Vagina (tissue), 2 donors: ENCODE measurements at regions of chr10 and their contacts with region 1.

Region 1: DNA sequence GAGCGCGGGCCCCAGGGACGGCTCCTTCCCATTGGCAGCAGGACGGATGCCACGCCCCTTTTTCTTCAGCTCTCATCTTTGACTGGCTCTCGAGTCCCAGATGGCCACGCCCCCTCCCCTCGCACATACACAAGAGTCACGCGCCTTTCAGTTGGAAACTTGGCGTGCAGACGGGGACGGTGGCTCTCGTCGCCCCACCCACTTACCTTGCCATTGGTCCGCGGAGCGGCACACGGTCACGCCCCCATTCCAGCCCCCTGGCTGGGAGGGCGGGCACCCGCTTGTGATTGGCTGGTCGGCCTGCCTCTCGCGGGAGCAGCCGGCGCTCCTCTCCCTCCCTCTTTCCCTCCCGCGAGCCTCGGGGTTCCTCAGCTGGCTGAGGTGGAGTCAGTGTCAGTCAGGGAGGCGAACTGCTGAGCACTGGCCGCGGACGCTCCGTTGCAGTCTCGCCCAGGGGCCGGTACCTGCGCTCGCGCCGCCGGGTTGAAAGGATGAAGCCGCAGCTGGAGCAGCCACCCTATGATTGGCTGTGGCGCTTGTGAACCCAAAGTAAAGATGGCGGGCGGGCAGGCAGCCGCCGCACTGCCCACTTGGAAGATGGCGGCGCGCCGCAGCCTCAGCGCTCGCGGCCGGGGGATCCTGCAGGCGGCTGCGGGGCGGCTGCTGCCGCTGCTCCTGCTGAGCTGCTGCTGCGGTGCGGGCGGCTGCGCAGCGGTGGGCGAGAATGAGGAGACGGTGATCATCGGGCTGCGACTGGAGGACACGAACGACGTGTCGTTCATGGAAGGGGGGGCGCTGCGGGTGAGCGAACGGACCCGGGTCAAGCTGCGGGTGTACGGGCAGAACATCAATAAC is at the start of gene CNNM2:
- DNase-seq: peak; percentile 99 to 100
- H3K4me3 ChIP-seq: peak within 1 kb of the TSS; percentile 83 to 85
- H3K27ac ChIP-seq: peak within 1 kb of the TSS; percentile 99
- H3K4me1 ChIP-seq: peaks cover 42% of the 10 kb centered on the region
- H3K27me3 ChIP-seq: no peaks in the 10 kb centered on the region
- CTCF ChIP-seq: no peak
- POLR2A ChIP-seq: peak in 1 of 2 donors; percentile 8
- total RNA-seq, gene CNNM2: 9.6 TPM

Region 2: GRCh38 chr10:102868911-102869257 is 49.3 kb before region 1 on chr10:
- intact Hi-C with region 1: no loop called
- DNase-seq: no peak
- H3K4me3 ChIP-seq: peak overlapping the region; percentile 59 to 62
- H3K27ac ChIP-seq: peak overlapping the region; percentile 46
- H3K4me1 ChIP-seq: peaks cover 11% of the 10 kb centered on the region
- H3K27me3 ChIP-seq: no peaks in the 10 kb centered on the region
- CTCF ChIP-seq: no peak
- POLR2A ChIP-seq: no peak

Region 3: DNA sequence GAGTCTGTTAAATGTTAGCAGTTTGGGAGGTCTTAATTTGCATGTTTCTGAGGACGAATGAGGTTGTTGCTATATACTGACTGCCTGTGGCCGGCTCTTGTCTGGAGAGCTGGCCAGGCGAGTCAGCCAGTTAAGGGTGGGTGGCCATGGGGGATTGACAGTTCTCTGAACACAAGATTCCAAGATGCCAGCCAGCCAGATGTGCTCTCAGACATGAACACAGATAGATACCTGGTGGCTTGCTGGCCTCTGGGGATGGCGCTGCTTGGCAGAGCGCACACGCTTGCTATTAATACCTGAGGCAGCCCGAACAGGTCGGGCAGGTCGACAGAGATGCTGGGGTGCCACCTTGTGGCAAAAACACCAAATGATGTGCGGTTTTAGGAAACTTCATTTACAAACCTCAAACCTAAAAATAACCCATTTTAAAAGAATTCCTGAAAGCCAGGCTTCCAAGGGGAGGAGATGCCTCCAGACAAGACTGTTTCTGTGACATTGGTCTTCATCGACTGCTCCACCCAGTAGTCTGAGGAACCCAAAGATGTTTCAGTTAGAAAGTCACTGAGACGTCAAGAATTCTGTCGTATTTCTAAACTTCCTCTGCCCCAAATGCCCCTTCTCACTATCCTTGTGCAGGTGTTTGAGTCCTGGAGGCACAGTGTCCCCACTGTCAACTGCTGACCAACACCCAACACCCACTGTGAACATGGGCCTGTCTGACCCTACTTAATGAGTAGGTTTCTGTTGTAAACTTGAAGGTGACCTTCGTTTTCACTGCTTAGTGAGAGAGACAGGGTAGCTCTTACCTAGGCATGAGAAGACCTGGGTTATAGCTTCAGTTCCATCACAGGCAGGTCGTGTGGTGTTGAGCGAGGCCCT is 151.5 kb after region 1 on chr10:
- intact Hi-C with region 1: loop called (anchors 2 kb)
- DNase-seq: no peak
- H3K4me3 ChIP-seq: no peak overlapping the region
- H3K27ac ChIP-seq: no peak overlapping the region
- H3K4me1 ChIP-seq: no peaks in the 10 kb centered on the region
- H3K27me3 ChIP-seq: no peaks in the 10 kb centered on the region
- CTCF ChIP-seq: peak; percentile 29 to 39 (median 37)
- POLR2A ChIP-seq: no peak

Region 4: DNA sequence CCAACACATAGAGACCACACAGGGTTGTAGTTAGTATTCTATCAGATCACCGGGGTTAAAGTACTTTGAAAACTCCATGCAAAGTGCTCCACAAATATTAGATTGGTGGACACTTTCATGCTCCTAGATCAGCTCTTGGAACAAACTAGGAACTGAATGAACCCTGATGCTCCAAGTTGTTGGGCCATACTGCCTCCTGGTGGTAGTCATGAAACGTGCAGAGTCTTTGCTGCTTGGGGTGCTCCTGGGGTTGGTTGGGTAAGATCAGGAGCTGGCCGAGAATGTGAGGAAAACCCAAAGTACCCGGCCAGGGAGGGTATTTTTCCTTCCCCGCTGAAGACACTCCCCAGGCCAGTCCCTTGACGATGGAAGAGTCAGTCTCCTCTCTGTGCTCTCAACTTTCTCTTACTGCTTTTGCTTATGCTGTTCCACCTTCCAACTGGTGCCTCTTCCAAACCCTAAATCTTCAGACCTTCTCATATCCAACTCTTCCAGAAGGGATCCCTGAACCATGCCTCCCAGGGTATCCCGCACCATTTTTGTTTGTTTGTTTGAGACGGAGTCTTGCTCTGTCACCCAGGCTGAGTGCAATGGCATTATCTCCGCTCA is 326.6 kb after region 1 on chr10:
- intact Hi-C with region 1: loop called (anchors 2 kb)
- DNase-seq: no peak
- H3K4me3 ChIP-seq: no peak overlapping the region
- H3K27ac ChIP-seq: no peak overlapping the region
- H3K4me1 ChIP-seq: no peaks in the 10 kb centered on the region
- H3K27me3 ChIP-seq: no peaks in the 10 kb centered on the region
- CTCF ChIP-seq: peak; percentile 73 to 95 (median 83)
- POLR2A ChIP-seq: no peak